GM12878 (cell line): ENCODE measurements at regions of chrX and their contacts with region 1.

Region 1: DNA sequence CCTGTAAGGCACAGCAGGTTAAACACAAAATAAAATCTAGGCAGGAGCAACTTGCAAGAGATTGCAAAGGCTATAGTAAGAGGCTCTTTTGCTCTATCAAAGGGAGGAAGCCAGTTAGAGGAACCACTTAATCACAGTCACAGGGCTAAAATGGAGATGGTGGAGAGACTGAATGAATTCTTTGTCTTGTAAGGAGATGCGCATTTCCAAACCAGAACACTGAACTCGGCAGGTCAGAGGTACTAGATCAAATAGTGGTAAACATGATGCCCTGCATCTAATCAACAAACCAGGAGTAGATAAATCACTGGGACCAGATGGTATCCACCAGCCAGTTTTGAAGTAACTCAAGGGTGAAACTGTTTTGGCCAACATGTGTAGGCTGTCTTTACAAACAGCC is 55.8 kb downstream of the GPC4 start:
- DNase-seq: no peak
- ATAC-seq: no peak
- H3K4me3 ChIP-seq: no peak overlapping the region
- H3K27ac ChIP-seq: no peak overlapping the region
- H3K4me1 ChIP-seq: no peaks in the 10 kb centered on the region
- H3K27me3 ChIP-seq: no peaks in the 10 kb centered on the region
- CTCF ChIP-seq: no peak
- EP300 ChIP-seq: no peak
- POLR2A ChIP-seq: no peak
- RAD21 ChIP-seq: no peak

Region 2: DNA sequence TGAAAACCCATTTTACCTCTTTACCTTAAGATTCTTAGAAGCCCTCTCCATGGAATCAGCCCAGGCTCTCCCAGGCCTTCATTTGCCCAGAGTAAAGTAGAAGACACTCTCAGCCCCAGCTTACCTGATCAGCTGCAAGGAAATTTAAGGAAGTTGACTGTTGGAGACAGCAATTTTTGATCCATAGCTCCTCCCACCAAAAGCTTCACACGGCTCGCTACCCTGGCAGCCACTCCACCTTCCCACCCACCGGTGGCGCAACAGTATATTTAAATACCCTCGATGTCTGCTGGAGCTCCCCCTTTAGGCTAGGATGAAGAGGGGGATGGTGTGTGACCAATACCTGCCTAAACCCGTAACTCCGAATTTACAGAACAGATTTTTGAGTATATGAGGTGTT is 946.0 kb before region 1 on chrX:
- CTCF ChIA-PET with region 1: no interaction called
- POLR2A ChIA-PET with region 1: no interaction called
- RAD21 ChIA-PET with region 1: no interaction called
- SMC1A ChIA-PET with region 1: no interaction called
- in situ Hi-C with region 1: no loop called
- intact Hi-C with region 1: no loop called
- DNase-seq: no peak
- ATAC-seq: no peak
- H3K4me3 ChIP-seq: no peak overlapping the region
- H3K27ac ChIP-seq: no peak overlapping the region
- H3K4me1 ChIP-seq: no peaks in the 10 kb centered on the region
- H3K27me3 ChIP-seq: no peaks in the 10 kb centered on the region
- CTCF ChIP-seq: no peak
- EP300 ChIP-seq: no peak
- POLR2A ChIP-seq: no peak
- RAD21 ChIP-seq: no peak

Region 3: GRCh38 chrX:133373386-133374079 is 14.1 kb after region 1 on chrX:
- CTCF ChIA-PET with region 1: interaction called, 11 read pairs
- POLR2A ChIA-PET with region 1: interaction called, 5 read pairs
- RAD21 ChIA-PET with region 1: interaction called, 5 read pairs
- SMC1A ChIA-PET with region 1: interaction called, 9 read pairs
- in situ Hi-C with region 1: no loop called
- intact Hi-C with region 1: no loop called
- DNase-seq: no peak
- ATAC-seq: peak; percentile 79
- H3K4me3 ChIP-seq: no peak overlapping the region
- H3K27ac ChIP-seq: no peak overlapping the region
- H3K4me1 ChIP-seq: no peaks in the 10 kb centered on the region
- H3K27me3 ChIP-seq: no peaks in the 10 kb centered on the region
- CTCF ChIP-seq: no peak
- EP300 ChIP-seq: 0 out of 4 replicates have a peak, but pooled peaks of 1 of the 2 experiments have one; percentile 28
- POLR2A ChIP-seq: no peak
- RAD21 ChIP-seq: no peak

Region 4: GRCh38 chrX:133415276-133416105 is 56.0 kb after region 1 on chrX and contains the start of gene GPC4:
- CTCF ChIA-PET with region 1: interaction called, 3 read pairs
- POLR2A ChIA-PET with region 1: interaction called, 4 read pairs
- RAD21 ChIA-PET with region 1: interaction called, 4 read pairs
- SMC1A ChIA-PET with region 1: interaction called, 10 read pairs
- in situ Hi-C with region 1: no loop called
- intact Hi-C with region 1: no loop called
- DNase-seq: no peak
- ATAC-seq: peak; percentile 50
- H3K4me3 ChIP-seq: no peak within 1 kb of the TSS
- H3K27ac ChIP-seq: no peak within 1 kb of the TSS
- H3K4me1 ChIP-seq: no peaks in the 10 kb centered on the region
- H3K27me3 ChIP-seq: no peaks in the 10 kb centered on the region
- CTCF ChIP-seq: no peak
- EP300 ChIP-seq: no peak
- POLR2A ChIP-seq: no peak
- RAD21 ChIP-seq: no peak
- polyA plus RNA-seq, gene GPC4: 0.04 to 0.08 TPM